Gastrocnemius medialis (tissue), 4 donors: ENCODE measurements at regions of chr2 and their contacts with region 1.

Region 1: DNA sequence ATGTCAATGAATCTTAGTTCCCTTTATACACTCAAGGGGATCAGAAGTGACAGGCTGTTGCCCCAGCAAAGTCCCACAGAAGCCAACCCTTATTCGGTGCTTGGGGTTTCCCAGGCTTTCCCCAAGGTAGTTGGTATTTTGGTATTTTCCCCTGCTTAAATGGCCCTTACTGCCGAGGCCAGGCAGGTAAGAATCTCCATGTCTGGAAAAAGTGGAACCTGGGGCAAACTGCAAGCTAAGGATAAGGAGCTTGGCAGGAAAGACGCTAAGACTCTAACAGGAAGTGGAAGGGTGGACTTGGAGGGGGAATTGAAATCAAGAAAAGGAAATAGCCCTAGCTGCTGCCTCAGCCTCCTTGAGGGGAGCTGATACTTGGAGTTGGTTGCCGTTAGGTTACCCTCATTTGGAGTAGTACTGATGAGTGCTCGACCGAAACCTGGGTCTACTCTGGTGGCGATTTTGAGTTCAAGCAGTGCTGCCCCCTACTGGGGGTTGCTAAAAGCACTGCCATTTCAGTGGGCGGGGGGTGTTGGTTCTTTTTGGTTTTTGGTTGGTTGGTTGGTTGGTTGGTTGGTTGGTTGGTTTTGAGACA is 3.3 kb upstream of the GPBAR1 start:
- DNase-seq: peak in 1 of 2 donors; percentile 9
- ATAC-seq: peak; percentile 8 to 38
- H3K4me3 ChIP-seq: no peak overlapping the region
- H3K27ac ChIP-seq: peak overlapping the region in 2 of 4 donors; percentile 9 to 14
- H3K4me1 ChIP-seq: peaks cover 35 to 36% of the 10 kb centered on the region in 2 donors
- H3K27me3 ChIP-seq: no peaks in the 10 kb centered on the region
- CTCF ChIP-seq: peak; percentile 38 to 66 (median 59)
- POLR2A ChIP-seq: no peak

Region 2: GRCh38 chr2:218216674-218217359 is 40.7 kb before region 1 on chr2 and contains the start of gene ARPC2:
- in situ Hi-C with region 1: no loop called
- intact Hi-C with region 1: loop called (anchors 5 kb)
- DNase-seq: peak; percentile 86 to 91
- ATAC-seq: peak; percentile 85 to 88
- H3K4me3 ChIP-seq: peak within 1 kb of the TSS; percentile 87 to 99 (median 94)
- H3K27ac ChIP-seq: peak within 1 kb of the TSS; percentile 96 to 99 (median 97)
- H3K4me1 ChIP-seq: peaks cover 38 to 47% of the 10 kb centered on the region in 2 donors
- H3K27me3 ChIP-seq: no peaks in the 10 kb centered on the region
- CTCF ChIP-seq: peak; percentile 9 to 46 (median 42)
- POLR2A ChIP-seq: peak; percentile 92
- total RNA-seq, gene ARPC2: 181 to 231 (median 193) TPM